ENCODE measurements at regions of chr1 and their contacts with region 1.

Region 1: GRCh38 chr1:218330043-218330623 is 15.0 kb upstream of the TGFB2 start:
- DNase-seq: no peak

Region 2: DNA sequence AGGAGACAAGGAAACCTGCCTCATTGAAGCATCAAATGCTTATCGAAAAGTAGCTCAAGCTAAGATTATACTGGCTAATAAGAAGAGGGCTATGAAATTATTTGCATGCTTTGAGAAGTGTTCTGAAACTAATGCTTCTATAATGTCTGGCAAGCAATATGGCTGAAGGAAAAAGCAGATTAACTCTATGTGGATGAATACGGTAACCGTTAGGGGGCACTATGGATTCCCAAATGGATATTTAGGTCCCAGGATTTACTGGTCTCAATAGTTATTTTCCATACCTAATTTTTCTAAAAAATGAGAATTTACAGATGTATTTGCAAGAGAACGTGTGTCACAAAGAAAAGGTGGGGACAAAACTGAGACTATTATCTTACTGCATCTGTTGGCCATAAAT is 79.6 kb before region 1 on chr1:
- intact Hi-C with region 1: no loop called
- DNase-seq: no peak

Region 3: GRCh38 chr1:219416594-219417238 is 1086.6 kb after region 1 on chr1:
- intact Hi-C with region 1: loop called (anchors 10 kb)
- DNase-seq: peak in 6 of 10 donors; percentile 14 to 79 (median 62)

Region 4: GRCh38 chr1:219566951-219567947 is 1237.1 kb after region 1 on chr1:
- intact Hi-C with region 1: loop called (anchors 5 kb)
- DNase-seq: no peak

Region 5: DNA sequence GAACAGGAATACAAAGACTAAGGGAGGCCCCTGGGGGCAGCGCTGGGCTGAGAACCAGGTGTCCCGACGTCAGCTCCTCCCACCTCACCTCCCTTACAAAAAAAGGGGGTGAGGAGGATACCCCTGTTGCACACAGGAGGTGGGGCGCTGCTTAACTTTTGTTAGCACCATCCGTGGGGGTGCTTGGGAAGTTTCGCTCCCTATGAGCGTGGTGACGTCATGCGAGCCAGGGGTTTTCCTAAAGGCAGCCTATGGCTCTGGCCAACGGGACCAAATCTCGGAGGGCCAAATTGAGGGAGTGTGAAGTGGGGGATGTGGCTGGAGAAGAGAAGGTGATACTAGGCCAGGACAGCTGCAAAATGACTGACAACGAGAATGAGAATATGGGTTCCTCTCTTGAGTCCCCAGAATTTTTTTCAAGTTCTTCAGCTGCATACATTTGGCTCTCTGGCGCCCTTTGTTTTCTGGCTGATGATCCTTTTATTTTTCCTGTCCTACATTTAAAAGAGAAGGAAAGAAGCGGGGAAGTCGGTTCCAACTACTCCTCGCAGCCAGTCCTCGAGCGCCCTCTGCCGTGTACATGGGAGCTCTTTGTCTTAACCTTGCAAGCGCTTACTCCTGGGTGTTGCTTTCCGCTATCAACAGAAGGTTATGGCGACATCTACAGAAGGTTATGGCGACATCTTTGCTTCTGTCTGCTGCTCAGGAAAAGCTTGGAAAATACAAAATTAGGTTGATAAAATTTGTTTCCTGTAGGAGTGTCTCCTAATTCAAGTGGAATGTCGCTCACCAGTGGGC is 1330.7 kb after region 1 on chr1:
- intact Hi-C with region 1: loop called (anchors 5 kb)
- DNase-seq: peak; percentile 80 to 98 (median 94)

Region 6: DNA sequence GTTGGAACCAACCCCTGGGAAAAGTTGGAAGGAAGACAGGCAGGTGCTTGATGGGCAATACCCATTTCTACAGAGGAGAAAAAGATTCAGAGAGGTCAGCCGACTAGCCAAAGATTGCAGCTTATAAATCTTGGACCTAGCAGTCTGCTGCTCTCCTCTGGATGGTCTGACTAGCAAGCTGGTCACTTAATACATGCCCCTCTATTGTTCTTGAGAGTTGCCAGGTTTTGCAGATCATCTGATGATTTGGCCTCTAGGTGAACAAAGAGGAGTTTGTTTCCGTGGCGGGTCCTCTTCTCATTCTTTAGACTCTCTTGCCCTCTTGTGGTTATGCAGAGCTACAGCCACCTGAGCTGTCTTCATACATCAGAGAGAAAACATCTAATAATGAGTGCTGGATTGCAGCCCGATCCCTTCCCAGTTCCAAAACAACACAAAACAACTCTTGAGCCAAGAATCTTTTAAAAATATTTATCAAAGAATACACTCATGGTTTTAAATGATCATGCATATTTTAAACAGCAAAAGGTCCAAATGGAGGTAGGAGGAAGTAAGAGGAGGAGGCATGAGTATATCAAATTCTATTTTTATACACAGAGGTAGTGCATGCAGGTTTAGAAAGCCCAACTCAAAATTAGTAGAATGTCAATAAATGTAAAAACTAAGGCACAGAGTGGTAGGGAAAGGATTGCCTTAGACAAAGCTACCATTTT is 1482.5 kb after region 1 on chr1:
- intact Hi-C with region 1: loop called (anchors 2 kb)
- DNase-seq: peak in 5 of 10 donors; percentile 9 to 51 (median 32)